Calu3 (cell line): ENCODE measurements at regions of chr1 and their contacts with region 1.

Region 1: DNA sequence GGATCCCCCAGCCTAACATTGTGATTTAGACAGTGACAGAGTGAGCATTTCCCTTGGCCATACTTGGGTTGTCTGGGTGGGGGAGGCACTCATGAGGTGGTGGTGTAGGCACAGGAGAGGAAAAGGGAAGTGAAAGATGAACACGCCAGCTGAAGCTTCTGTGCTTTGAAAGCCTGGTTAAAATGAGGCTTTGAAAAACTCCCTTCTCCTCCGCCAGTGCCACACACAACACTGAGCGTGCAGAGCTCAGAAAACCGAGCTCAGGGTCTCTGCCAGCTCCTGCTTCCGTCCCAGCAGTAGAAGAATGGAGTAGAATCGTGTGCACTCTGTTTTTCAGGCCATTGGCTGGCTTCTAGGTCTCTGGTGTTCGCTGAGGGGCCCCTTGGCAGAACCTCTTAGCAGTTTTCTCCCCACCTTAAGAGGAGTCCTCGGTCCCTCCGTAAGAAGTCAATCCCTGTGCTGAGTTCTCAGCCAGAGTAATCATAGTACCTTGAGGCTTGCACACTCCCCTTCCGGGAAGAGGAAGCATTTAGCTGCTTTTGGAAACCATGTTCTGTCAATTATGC is 12.9 kb downstream of the PLEKHM2 start:
- DNase-seq: no peak
- H3K4me3 Mint-ChIP-seq: no peak overlapping the region
- H3K27ac Mint-ChIP-seq: no peak overlapping the region
- H3K4me1 Mint-ChIP-seq: no peaks in the 10 kb centered on the region
- H3K27me3 Mint-ChIP-seq: no peaks in the 10 kb centered on the region
- CTCF ChIP-seq: no peak

Region 2: GRCh38 chr1:15409388-15410222 is 287.4 kb before region 1 on chr1 and contains the start of gene EFHD2:
- CTCF ChIA-PET with region 1: no interaction called
- intact Hi-C with region 1: no loop called
- DNase-seq: peak; percentile 83
- H3K4me3 Mint-ChIP-seq: peak within 1 kb of the TSS; percentile 79
- H3K27ac Mint-ChIP-seq: peak within 1 kb of the TSS; percentile 86
- H3K4me1 Mint-ChIP-seq: peaks cover 23% of the 10 kb centered on the region
- H3K27me3 Mint-ChIP-seq: peaks cover 14% of the 10 kb centered on the region
- CTCF ChIP-seq: no peak
- total RNA-seq, gene EFHD2: 51.0 and 57.8 TPM in 2 replicates

Region 3: DNA sequence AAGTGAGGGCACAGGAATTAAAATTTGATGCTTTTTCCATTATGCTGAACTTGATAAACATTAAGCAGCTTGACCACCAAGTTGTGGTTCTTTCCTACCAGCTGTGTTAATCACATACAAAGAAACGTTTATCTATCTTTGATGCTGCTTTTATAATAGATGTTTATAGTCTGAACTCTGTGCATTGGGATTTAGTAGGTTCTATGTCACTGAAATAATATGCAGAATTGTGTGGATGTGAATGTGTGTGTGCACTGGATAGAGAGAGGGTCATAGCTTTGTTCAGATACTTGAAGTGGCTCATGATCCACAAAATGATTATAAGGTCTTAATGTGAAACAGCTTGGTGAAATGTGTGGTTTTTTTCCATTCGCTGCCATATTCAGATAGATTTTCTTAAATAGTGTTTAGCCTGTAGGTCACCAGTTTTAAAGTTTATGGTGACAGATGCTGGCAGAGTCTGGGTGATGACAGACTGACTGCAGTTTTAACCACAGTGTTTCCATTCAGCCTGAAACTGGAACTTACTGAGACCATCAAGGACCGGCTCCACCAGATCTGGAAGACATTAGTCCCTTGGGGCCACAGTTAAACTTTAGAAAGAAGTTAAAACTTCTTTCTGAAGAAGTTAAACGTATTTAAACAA is 69.6 kb before region 1 on chr1:
- CTCF ChIA-PET with region 1: no interaction called
- intact Hi-C with region 1: no loop called
- DNase-seq: no peak
- H3K4me3 Mint-ChIP-seq: no peak overlapping the region
- H3K27ac Mint-ChIP-seq: no peak overlapping the region
- H3K4me1 Mint-ChIP-seq: peaks cover 7% of the 10 kb centered on the region
- H3K27me3 Mint-ChIP-seq: no peaks in the 10 kb centered on the region
- CTCF ChIP-seq: no peak

Region 4: GRCh38 chr1:15735304-15736037 is 38.4 kb after region 1 on chr1:
- CTCF ChIA-PET with region 1: interaction called, 11 read pairs
- intact Hi-C with region 1: no loop called
- DNase-seq: no peak
- H3K4me3 Mint-ChIP-seq: no peak overlapping the region
- H3K27ac Mint-ChIP-seq: no peak overlapping the region
- H3K4me1 Mint-ChIP-seq: no peaks in the 10 kb centered on the region
- H3K27me3 Mint-ChIP-seq: no peaks in the 10 kb centered on the region
- CTCF ChIP-seq: no peak